ENCODE measurements at regions of chrX and their contacts with region 1.

Region 1: DNA sequence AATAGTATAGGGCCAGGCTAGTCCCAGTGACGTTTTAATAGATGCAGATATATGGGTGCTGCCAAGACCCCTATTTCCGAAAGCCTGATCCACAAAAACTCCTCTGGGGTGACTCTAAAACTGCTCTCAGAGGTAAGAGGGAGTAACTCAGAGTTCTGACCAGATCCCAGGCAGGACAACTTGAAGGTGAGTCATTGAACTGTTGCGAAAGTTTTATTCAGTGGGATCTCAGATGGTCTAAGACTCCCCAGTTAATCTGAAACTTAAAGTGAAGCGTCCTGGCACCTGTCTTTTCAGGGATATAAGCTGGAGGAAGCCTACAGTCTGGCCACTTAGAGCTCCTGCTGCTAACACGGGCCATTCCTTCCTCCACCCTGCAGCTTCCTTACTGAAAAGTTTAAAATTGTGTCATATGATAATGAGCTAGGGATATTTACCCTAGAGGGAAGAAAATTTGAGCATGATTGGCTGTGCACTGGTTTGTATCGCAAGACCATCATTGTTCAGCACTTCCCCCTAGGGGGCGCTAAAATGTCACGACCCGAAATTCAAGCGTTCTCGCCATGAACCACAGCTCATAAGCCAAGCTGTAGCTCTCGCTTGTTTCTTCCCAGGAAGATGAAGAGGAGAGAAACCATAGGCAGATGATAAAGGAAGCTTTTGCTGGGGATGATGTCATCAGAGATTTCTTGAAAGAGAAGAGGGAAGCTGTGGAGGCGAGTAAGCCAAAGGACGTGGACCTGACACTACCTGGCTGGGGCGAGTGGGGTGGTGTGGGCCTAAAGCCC is 19.5 kb downstream of the UTP14A start:
- DNase-seq: peak; percentile 41
- H3K4me3 ChIP-seq: no peak overlapping the region
- H3K27ac ChIP-seq: no peak overlapping the region
- H3K4me1 ChIP-seq: no peaks in the 10 kb centered on the region
- H3K27me3 ChIP-seq: no peaks in the 10 kb centered on the region
- CTCF ChIP-seq: peak; percentile 71

Region 2: GRCh38 chrX:129310000-129310399 is 615.5 kb before region 1 on chrX:
- intact Hi-C with region 1: no loop called
- DNase-seq: no peak
- H3K4me3 ChIP-seq: no peak overlapping the region
- H3K27ac ChIP-seq: no peak overlapping the region
- H3K4me1 ChIP-seq: no peaks in the 10 kb centered on the region
- H3K27me3 ChIP-seq: no peaks in the 10 kb centered on the region
- CTCF ChIP-seq: no peak

Region 3: DNA sequence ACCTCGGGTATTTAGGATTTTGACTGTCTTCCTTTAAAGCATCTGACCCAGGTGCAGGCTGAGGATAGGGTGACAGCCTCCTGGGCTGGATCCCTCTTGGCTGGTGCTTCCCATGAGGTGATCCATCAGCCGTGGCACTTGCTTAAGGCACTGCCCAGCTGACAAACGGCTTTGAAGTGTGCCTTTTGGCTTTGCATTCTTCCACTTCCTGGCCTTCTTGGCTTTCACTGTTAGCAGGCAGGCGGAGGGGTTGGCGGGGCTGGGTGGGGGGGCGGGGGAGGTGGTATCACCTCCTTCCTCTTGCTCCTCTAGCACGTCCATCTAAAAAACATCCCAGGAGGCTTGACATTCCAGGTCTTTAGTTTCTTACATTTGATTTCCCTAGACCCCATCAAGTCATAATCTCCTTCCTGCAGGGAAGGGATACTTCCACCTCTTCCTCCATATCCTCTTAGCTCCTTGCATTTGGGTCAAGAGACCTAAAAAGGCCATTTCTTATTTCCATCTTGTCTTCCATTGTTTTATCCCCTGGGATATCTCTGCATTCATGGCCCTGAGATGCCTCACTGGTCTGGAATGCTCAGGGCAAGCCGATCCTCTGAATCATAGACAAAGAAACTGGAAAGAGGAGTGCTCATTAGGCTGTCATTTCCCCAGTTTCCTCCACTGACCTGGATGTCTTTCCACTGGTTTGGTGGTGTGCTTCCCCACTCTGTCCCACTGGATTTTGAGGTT is 259.4 kb before region 1 on chrX:
- intact Hi-C with region 1: no loop called
- DNase-seq: no peak
- H3K4me3 ChIP-seq: no peak overlapping the region
- H3K27ac ChIP-seq: no peak overlapping the region
- H3K4me1 ChIP-seq: no peaks in the 10 kb centered on the region
- H3K27me3 ChIP-seq: no peaks in the 10 kb centered on the region
- CTCF ChIP-seq: no peak

Region 4: DNA sequence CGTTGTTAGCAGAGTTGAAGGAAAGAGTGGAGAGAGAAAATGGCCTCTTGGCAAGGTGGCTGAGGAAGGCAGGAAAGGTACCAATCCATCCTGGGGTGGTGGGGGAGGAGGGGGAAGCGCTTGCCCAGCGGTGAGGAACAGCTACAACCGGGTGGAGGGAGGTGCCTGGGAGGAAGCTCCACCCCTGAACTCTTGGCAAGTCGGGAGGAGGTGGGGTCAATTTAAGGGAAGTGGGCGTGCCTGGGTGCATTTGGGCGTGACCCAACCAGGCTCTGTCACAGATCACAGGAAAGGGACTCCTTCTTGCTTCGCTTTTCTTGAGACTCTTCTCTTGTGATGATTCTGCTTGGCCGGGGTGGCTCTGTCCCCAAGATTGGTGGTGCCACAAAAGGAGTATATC is 98.6 kb after region 1 on chrX:
- intact Hi-C with region 1: loop called (anchors 10 kb)
- DNase-seq: peak; percentile 78
- H3K4me3 ChIP-seq: no peak overlapping the region
- H3K27ac ChIP-seq: peak overlapping the region; percentile 48
- H3K4me1 ChIP-seq: peaks cover 14% of the 10 kb centered on the region
- H3K27me3 ChIP-seq: no peaks in the 10 kb centered on the region
- CTCF ChIP-seq: no peak

Region 5: GRCh38 chrX:130060122-130061069 is 134.9 kb after region 1 on chrX:
- intact Hi-C with region 1: loop called (anchors 10 kb)
- DNase-seq: peak; percentile 78
- H3K4me3 ChIP-seq: peak overlapping the region; percentile 68
- H3K27ac ChIP-seq: peak overlapping the region; percentile 77
- H3K4me1 ChIP-seq: peaks cover 3% of the 10 kb centered on the region
- H3K27me3 ChIP-seq: no peaks in the 10 kb centered on the region
- CTCF ChIP-seq: peak; percentile 85